Psoas muscle (tissue), 8 donors: ENCODE measurements at regions of chr1 and their contacts with region 1.

Region 1: DNA sequence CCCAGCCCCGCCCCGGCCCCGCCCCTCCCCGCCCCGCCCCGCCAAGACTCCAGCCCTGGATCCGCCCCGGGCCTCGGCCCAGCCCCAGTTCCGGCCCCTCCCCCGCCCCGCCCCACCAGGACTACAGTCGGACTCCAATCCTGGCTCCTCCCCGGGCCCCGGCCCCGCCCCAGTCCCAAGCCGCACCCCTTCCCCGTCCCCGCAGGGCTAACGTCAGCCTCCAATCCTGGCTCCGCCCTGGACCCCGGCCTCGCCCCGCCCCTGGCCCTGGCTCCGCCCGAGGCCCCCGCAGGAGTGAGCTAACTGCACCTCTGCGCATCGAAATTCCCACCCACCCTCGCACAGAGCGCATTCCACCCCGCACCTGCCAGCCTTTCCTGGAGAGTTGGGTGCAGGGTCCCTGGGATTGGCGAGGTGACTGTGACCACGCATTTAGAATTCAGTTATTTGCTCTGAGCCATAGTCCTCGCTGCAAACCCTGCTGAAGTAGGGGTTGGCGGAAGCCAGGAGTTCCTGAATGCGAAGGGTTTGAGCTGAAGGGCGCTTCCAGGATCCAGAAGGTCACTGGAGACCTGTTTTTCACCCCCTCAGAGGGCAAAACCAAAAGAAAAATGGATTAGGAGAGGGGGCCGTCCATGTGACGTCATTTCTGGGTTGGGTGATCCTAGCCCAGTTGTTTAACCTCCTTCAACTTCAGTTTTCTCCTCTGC is 588 bp upstream of the IGSF8 start:
- DNase-seq: peak; percentile 98 to 99
- ATAC-seq: peak; percentile 78 to 86 (median 79)
- H3K4me3 ChIP-seq: peak overlapping the region; percentile 89
- H3K27ac ChIP-seq: peak overlapping the region; percentile 87
- H3K4me1 ChIP-seq: peaks cover 41% of the 10 kb centered on the region
- H3K27me3 ChIP-seq: no peaks in the 10 kb centered on the region
- CTCF ChIP-seq: no peak

Region 2: DNA sequence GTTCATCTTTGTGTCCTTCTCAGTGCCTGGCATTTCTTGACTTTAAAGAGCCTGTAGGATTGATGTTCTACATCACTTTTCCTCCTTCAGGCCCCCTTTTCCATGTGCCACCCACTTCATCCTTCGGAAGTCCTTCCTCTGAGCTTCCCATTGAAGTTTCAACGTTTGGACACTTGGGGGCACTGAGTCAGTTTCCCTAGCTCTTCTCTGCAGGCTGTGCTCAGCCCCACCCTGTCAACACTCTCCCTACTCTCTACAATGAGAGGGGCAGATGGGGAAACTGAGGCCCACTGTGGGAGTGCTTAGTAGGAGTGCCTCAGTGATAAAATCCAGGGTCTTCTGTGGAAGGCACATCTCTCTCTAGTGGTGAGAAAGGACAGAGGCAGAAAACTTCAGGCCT is 40.9 kb before region 1 on chr1:
- intact Hi-C with region 1: no loop called
- DNase-seq: no peak
- ATAC-seq: peak in 1 of 4 donors; percentile 51
- H3K4me3 ChIP-seq: no peak overlapping the region
- H3K27ac ChIP-seq: no peak overlapping the region
- H3K4me1 ChIP-seq: no peaks in the 10 kb centered on the region
- H3K27me3 ChIP-seq: peaks cover 0 to 2% (median 2%) of the 10 kb centered on the region in 3 donors
- CTCF ChIP-seq: peak; percentile 28

Region 3: GRCh38 chr1:160159493-160160245 is 60.7 kb after region 1 on chr1:
- intact Hi-C with region 1: loop called in 1 of 2 experiments (anchors 5 kb)
- DNase-seq: no peak
- ATAC-seq: no peak
- H3K4me3 ChIP-seq: no peak overlapping the region
- H3K27ac ChIP-seq: no peak overlapping the region
- H3K4me1 ChIP-seq: no peaks in the 10 kb centered on the region
- H3K27me3 ChIP-seq: no peaks in the 10 kb centered on the region
- CTCF ChIP-seq: no peak

Region 4: DNA sequence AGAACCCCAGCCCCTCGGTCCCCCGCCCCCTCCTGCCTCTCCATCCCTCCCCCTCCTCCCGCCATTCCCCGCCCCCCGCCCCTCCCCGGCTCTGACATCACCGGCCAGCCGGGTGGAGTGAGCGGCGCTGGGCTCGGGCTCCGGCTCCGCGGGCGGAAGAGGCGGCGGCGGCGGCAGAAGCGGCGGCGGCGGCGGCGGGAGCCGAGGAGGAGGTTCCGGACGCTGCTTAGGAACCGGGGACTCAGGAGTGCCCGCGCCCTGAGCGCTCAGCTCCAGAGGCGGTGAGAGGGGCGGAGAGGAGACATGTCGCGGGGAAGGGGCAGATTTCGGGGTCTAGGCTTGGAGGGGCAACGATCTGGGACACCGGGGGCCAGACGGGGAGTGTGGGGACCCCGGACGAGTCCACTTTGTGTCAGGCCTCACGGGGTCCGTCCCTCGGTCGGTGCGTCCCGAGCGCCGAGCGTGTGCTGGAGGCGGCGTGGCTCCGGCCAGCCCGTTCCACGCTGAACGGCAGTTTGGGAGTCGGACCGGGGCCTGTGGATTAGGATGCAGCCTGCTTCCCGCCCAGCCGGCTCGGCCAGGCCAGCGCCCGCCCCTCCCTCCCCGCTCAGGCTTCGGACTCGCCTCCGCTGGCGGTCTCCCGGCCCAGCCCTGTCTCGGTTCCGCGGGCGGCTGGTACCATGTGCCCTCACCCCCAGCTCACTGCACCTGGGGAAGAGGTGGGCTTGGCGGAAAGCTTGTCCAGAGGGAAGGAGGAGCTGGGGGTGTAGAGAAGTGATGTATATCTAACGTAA is 106.4 kb after region 1 on chr1 and contains the start of gene PEA15:
- intact Hi-C with region 1: loop called in 1 of 2 experiments (anchors 5 kb)
- DNase-seq: peak; percentile 84
- ATAC-seq: peak; percentile 72 to 86 (median 81)
- H3K4me3 ChIP-seq: peak within 1 kb of the TSS; percentile 95
- H3K27ac ChIP-seq: peak within 1 kb of the TSS; percentile 92
- H3K4me1 ChIP-seq: peaks cover 44% of the 10 kb centered on the region
- H3K27me3 ChIP-seq: no peaks in the 10 kb centered on the region
- CTCF ChIP-seq: no peak
- total RNA-seq, gene PEA15: 51.2 to 232 (median 95.8) TPM

Region 5: GRCh38 chr1:160244209-160244608 is 145.2 kb after region 1 on chr1:
- intact Hi-C with region 1: loop called in 1 of 2 experiments (anchors 5 kb)
- DNase-seq: no peak
- ATAC-seq: peak; percentile 41 to 77 (median 59)
- H3K4me3 ChIP-seq: peak overlapping the region; percentile 11
- H3K27ac ChIP-seq: peak overlapping the region; percentile 62
- H3K4me1 ChIP-seq: peaks cover 59% of the 10 kb centered on the region
- H3K27me3 ChIP-seq: no peaks in the 10 kb centered on the region
- CTCF ChIP-seq: no peak

Region 6: GRCh38 chr1:160251687-160252526 is 152.9 kb after region 1 on chr1:
- intact Hi-C with region 1: loop called (anchors 2 to 5 kb)
- DNase-seq: peak; percentile 56 to 74
- ATAC-seq: peak; percentile 93 to 94 (median 94)
- H3K4me3 ChIP-seq: no peak overlapping the region
- H3K27ac ChIP-seq: peak overlapping the region; percentile 58
- H3K4me1 ChIP-seq: peaks cover 45% of the 10 kb centered on the region
- H3K27me3 ChIP-seq: no peaks in the 10 kb centered on the region
- CTCF ChIP-seq: peak; percentile 80

Region 7: GRCh38 chr1:160376525-160377131 is 277.6 kb after region 1 on chr1:
- intact Hi-C with region 1: loop called in 1 of 2 experiments (anchors 5 kb)
- DNase-seq: no peak
- ATAC-seq: peak; percentile 78 to 97 (median 88)
- H3K4me3 ChIP-seq: no peak overlapping the region
- H3K27ac ChIP-seq: peak overlapping the region; percentile 7
- H3K4me1 ChIP-seq: peaks cover 4% of the 10 kb centered on the region
- H3K27me3 ChIP-seq: no peaks in the 10 kb centered on the region
- CTCF ChIP-seq: peak; percentile 90